Thyroid gland (tissue), 4 donors: ENCODE measurements at regions of chr12 and their contacts with region 1.

Region 1: GRCh38 chr12:76031537-76032073 is at the start of gene PHLDA1:
- DNase-seq: peak; percentile 95 to 97
- H3K4me3 ChIP-seq: peak within 1 kb of the TSS; percentile 86 to 90 (median 89)
- H3K27ac ChIP-seq: peak within 1 kb of the TSS; percentile 98 to 99 (median 99)
- H3K4me1 ChIP-seq: peaks cover 21 to 33% of the 10 kb centered on the region in 2 donors
- H3K27me3 ChIP-seq: no peaks in the 10 kb centered on the region
- CTCF ChIP-seq: peak in 5 of 6 experiments; percentile 41 to 67 (median 60)
- POLR2A ChIP-seq: peak; percentile 94 to 99
- total RNA-seq, gene PHLDA1: 45.2 to 73.1 (median 57.5) TPM

Region 2: DNA sequence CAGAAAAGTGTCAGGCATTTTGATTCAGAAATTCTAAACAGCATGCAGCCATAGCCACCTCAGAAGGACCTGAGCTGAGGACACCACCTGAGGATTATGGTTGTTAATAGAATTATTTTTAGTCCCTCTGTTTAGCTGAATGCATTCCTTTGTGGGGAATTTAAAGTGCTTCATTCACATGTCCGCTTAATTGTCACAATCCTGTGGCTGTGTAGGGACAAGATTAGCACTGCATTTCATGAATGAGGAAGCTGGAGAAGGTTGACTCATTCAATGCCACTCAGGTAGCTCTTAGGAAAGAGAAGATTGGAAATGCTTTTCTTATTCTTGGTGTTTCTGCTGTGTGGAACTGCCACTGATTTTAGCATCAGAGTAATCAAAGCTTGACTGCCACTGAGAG is 478.2 kb before region 1 on chr12:
- intact Hi-C with region 1: loop called (anchors 10 kb)
- DNase-seq: no peak
- H3K4me3 ChIP-seq: no peak overlapping the region
- H3K27ac ChIP-seq: peak overlapping the region; percentile 20 to 62 (median 39)
- H3K4me1 ChIP-seq: peaks cover 20 to 26% of the 10 kb centered on the region in 2 donors
- H3K27me3 ChIP-seq: no peaks in the 10 kb centered on the region
- CTCF ChIP-seq: no peak
- POLR2A ChIP-seq: no peak

Region 3: GRCh38 chr12:75913502-75914351 is 117.9 kb before region 1 on chr12:
- intact Hi-C with region 1: loop called (anchors 10 kb)
- DNase-seq: peak; percentile 48 to 54
- H3K4me3 ChIP-seq: no peak overlapping the region
- H3K27ac ChIP-seq: peak overlapping the region; percentile 77 to 88 (median 84)
- H3K4me1 ChIP-seq: peaks cover 32 to 35% of the 10 kb centered on the region in 2 donors
- H3K27me3 ChIP-seq: no peaks in the 10 kb centered on the region
- CTCF ChIP-seq: peak in 1 of 6 experiments; percentile 3
- POLR2A ChIP-seq: no peak